HepG2 (cell line): ENCODE measurements at regions of chr6 and their contacts with region 1.

Region 1: DNA sequence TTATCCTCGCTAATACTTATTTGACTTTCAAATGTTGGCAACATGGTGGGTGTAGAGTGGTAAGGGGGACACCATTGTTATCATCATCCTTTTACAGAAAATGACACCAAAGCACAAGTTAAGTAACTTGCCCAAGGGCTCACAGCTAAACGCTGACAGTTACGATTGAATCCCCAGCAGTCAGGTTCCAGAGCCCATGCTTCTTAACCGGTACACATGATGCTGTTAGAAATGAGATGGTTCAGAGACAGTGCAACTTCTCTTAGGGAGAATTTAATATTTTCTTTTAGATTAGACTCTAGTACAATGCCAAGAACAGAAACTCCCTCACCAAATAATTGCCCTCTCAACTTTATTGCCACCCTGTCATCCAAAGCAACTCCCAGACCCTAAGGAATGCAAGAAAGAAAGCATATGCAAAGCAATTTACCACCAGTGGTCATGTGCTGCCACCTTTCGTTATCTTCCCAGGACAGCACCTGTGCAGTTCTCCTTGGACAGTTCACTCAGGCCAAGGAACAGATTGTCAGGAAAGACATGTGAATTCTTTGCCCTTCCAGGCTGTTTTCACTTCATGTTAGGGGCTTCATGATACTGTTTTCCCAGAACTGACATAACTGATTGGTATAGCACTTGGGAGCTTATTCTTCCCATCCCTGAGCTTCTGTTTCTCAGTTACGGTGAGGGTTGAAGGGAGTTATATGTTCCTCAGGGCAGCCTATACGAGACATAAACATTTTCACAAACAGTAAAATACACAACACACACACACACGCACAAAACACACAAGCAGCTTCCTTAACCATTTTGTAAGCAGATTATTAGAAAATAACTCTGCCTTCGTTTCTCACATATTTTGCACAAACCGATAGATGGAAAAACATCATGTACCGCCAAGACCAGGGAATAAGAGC is 5.1 kb downstream of the HLA-DMA start:
- DNase-seq: peak; percentile 58
- ATAC-seq: peak; percentile 83
- H3K4me3 ChIP-seq: no peak overlapping the region
- H3K27ac ChIP-seq: no peak overlapping the region
- H3K4me1 ChIP-seq: peaks cover 3% of the 10 kb centered on the region; the same call in 1 of the 2 replicates
- H3K27me3 ChIP-seq: peaks cover 3 to 13% of the 10 kb centered on the region in 2 experiments; a peak in 2 of 5 replicates
- CTCF ChIP-seq: peak; percentile 91
- EP300 ChIP-seq: no peak
- POLR2A ChIP-seq: no peak
- RAD21 ChIP-seq: peak; percentile 82

Region 2: GRCh38 chr6:32885698-32886286 is 62.0 kb before region 1 on chr6:
- CTCF ChIA-PET with region 1: interaction called, 31 read pairs
- POLR2A ChIA-PET with region 1: no interaction called
- in situ Hi-C with region 1: loop called (anchors 5 kb)
- intact Hi-C with region 1: loop called (anchors 1 kb)
- DNase-seq: peak; percentile 77
- ATAC-seq: peak; percentile 67
- H3K4me3 ChIP-seq: no peak overlapping the region
- H3K27ac ChIP-seq: no peak overlapping the region
- H3K4me1 ChIP-seq: no peaks in the 10 kb centered on the region
- H3K27me3 ChIP-seq: peaks cover 0 to 36% of the 10 kb centered on the region in 2 experiments; a peak in 2 of 5 replicates
- CTCF ChIP-seq: peak; percentile 68
- EP300 ChIP-seq: no peak
- POLR2A ChIP-seq: no peak
- RAD21 ChIP-seq: peak; percentile 67

Region 3: DNA sequence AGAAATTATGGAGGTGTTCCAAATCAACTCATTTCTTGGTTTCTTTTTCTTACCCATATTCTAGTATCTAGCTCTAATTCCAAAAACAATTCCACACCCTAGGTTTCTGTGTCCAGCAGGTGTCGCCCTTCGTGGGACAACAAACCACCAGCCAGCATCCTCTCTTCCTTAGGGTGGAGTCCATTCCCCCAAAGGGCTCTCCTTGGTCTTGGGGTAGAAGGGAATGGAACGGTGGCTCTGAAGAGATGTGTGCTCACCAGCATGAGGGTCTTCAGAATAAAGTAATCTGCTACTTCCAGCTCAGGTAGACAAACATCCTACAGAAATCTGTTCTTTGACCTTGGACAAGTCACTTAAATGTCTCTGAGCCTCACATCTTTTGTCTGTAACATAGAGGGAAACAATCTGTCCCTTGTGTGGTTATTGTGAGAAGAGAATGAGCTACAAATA is 14.1 kb before region 1 on chr6:
- CTCF ChIA-PET with region 1: interaction called, 27 read pairs
- POLR2A ChIA-PET with region 1: interaction called, 5 read pairs
- in situ Hi-C with region 1: no loop called
- intact Hi-C with region 1: loop called (anchors 2 kb)
- DNase-seq: peak; percentile 67
- ATAC-seq: peak; percentile 65
- H3K4me3 ChIP-seq: no peak overlapping the region
- H3K27ac ChIP-seq: no peak overlapping the region
- H3K4me1 ChIP-seq: peaks cover 16% of the 10 kb centered on the region
- H3K27me3 ChIP-seq: peaks cover 2 to 28% of the 10 kb centered on the region in 2 experiments; a peak in 3 of 5 replicates
- CTCF ChIP-seq: peak; percentile 85
- EP300 ChIP-seq: no peak
- POLR2A ChIP-seq: no peak
- RAD21 ChIP-seq: peak; percentile 69

Region 4: DNA sequence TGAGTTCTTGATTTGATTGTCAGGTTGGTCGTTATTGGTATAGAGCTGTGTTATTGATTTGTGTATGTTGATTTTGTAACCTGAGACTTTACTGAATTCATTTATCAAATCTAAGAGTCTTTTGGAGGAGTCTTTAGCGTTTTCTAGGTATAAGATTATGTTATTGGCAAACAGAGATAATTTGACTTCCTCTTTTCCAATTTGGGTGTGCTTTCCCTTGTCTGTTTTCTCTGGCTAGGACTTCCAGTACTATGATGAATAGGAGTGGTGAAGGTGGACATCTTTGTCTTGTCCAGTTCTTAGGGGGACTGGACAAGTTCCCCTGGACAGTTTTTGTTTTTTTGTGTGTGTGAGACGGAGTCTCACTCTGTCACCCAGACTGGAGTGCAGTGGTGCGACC is 44.2 kb after region 1 on chr6:
- CTCF ChIA-PET with region 1: no interaction called
- POLR2A ChIA-PET with region 1: no interaction called
- in situ Hi-C with region 1: no loop called
- intact Hi-C with region 1: no loop called
- DNase-seq: no peak
- ATAC-seq: no peak
- H3K4me3 ChIP-seq: no peak overlapping the region
- H3K27ac ChIP-seq: no peak overlapping the region
- H3K4me1 ChIP-seq: no peaks in the 10 kb centered on the region
- H3K27me3 ChIP-seq: peaks cover 0 to 6% of the 10 kb centered on the region in 2 experiments; a peak in 1 of 5 replicates
- CTCF ChIP-seq: no peak
- EP300 ChIP-seq: no peak
- POLR2A ChIP-seq: no peak
- RAD21 ChIP-seq: no peak

Region 5: DNA sequence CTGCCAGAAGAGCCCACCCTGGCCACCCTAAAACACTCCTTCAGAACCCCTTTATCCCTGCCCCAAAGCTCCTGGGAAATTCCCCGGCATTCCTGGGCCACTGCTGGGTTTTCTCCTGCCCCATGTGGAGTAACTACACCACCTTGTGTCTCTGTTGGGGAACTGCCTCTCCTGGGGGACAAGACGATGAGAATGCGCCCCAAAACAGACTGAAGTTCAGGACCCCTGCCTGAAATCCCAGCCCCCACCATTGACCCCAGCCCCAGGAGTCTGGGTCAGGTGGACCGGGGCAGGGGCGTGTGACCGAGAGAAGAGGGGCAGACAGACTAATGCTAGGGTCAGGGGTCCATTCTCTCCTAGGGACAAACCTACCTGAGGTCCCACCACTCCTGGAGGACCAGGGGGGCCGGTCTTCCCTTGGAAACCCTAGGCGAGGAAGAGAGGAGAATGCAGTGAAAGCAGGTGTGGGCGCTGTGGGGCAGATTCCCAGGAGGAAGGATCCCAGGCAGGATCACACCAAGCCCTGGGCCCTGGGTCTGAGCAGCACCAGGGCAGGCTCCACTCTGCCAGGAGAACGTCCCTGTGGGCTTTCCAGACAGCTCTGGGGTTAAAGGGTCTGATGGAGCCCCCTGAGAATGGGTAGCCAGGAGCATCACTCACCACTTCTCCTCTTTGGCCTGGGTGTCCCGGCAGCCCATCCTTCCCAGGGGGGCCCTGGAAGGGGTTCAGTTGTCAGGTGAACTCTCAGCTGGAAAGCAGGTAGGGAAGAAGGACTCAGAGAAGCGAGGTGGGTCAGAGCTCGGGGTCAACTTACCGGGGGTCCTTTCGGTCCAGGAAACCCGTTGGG is 225.1 kb after region 1 on chr6:
- CTCF ChIA-PET with region 1: no interaction called
- POLR2A ChIA-PET with region 1: no interaction called
- in situ Hi-C with region 1: no loop called
- intact Hi-C with region 1: no loop called
- DNase-seq: peak; percentile 53
- ATAC-seq: peak; percentile 65
- H3K4me3 ChIP-seq: peak overlapping the region in 1 of 3 experiments; percentile 5; a peak in 1 of 6 replicates
- H3K27ac ChIP-seq: no peak overlapping the region
- H3K4me1 ChIP-seq: peaks cover 22% of the 10 kb centered on the region
- H3K27me3 ChIP-seq: peaks cover 2 to 48% of the 10 kb centered on the region in 2 experiments; a peak in 4 of 5 replicates
- CTCF ChIP-seq: peak; percentile 91
- EP300 ChIP-seq: no peak
- POLR2A ChIP-seq: no peak
- RAD21 ChIP-seq: peak; percentile 91